GM10248 (cell line): ENCODE measurements at regions of chr13 and their contacts with region 1.

Region 1: DNA sequence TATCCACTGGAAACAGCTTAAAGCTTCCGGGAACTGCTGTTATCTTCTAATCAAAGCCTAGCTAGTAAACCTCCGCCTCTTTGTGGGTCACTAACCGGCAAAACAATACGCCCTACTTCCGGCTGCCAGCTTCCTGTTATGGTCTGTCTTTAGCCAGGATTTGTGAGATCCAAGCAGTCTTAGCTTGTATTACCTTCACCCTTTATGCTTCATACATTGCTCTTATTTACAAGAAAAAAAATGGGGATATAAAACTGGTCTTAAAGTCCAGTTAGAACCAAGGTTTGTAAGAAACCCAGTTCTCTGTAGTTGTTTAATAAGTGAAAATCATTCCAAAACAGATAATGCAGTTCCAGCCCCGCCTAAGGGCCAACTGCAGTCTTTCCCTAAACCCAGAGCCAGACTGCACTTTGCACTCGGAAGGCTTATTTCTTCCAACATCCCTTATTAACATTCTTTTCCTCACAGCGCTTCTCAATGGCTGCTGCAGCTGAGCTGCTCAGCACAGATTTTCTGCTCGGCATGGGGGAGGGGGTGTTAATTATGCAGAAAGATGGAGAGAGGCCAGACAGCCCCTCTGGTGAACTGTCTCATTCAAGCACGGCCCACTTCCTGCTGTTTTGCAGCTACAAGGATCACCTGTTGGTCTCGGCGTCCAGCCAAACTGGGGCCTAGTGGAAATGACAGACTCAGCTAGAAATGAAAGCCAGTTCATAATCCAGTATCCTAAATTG is 368.4 kb downstream of the KLF12 start:
- DNase-seq: peak; percentile 34
- CTCF ChIP-seq: no peak

Region 2: GRCh38 chr13:73722120-73722519 is 43.7 kb before region 1 on chr13:
- CTCF ChIA-PET with region 1: interaction called, 10 read pairs
- POLR2A ChIA-PET with region 1: no interaction called
- DNase-seq: peak; percentile 26
- CTCF ChIP-seq: peak; percentile 9

Region 3: GRCh38 chr13:73754727-73755292 is 11.0 kb before region 1 on chr13:
- CTCF ChIA-PET with region 1: interaction called, 32 read pairs
- POLR2A ChIA-PET with region 1: no interaction called
- DNase-seq: peak; percentile 31
- CTCF ChIP-seq: peak; percentile 61

Region 4: GRCh38 chr13:73776151-73776785 is 10.4 kb after region 1 on chr13:
- CTCF ChIA-PET with region 1: interaction called, 26 read pairs
- POLR2A ChIA-PET with region 1: no interaction called
- DNase-seq: no peak
- CTCF ChIP-seq: no peak

Region 5: GRCh38 chr13:73803997-73804396 is 38.2 kb after region 1 on chr13:
- CTCF ChIA-PET with region 1: interaction called, 10 read pairs
- POLR2A ChIA-PET with region 1: no interaction called
- DNase-seq: no peak
- CTCF ChIP-seq: no peak